Heart left ventricle (tissue), 16 donors: ENCODE measurements at regions of chr12 and their contacts with region 1.

Region 1: GRCh38 chr12:66169221-66170170 is at the start of gene TMBIM4:
- DNase-seq: peak; percentile 90 to 94 (median 92)
- ATAC-seq: peak; percentile 96 to 97 (median 97)
- H3K4me3 ChIP-seq: peak within 1 kb of the TSS; percentile 56 to 90 (median 85)
- H3K27ac ChIP-seq: peak within 1 kb of the TSS; percentile 92 to 100 (median 98)
- H3K4me1 ChIP-seq: peaks cover 0 to 40% (median 17%) of the 10 kb centered on the region in 12 donors
- H3K27me3 ChIP-seq: no peaks in the 10 kb centered on the region
- CTCF ChIP-seq: peak; percentile 46 to 84 (median 64)
- POLR2A ChIP-seq: peak in 1 of 2 donors; percentile 58
- total RNA-seq, gene TMBIM4: 52.2 to 131 (median 85.3) TPM

Region 2: GRCh38 chr12:66044731-66045130 is 124.8 kb before region 1 on chr12:
- intact Hi-C with region 1: no loop called
- DNase-seq: no peak
- ATAC-seq: no peak
- H3K4me3 ChIP-seq: no peak overlapping the region
- H3K27ac ChIP-seq: no peak overlapping the region
- H3K4me1 ChIP-seq: no peaks in the 10 kb centered on the region
- H3K27me3 ChIP-seq: peaks cover 0 to 3% (median 0%) of the 10 kb centered on the region in 9 donors
- CTCF ChIP-seq: no peak
- POLR2A ChIP-seq: no peak

Region 3: GRCh38 chr12:66188584-66189485 is 19.3 kb after region 1 on chr12 and contains the start of gene IRAK3:
- intact Hi-C with region 1: loop called in 3 of 10 experiments (anchors 1 to 2 kb)
- DNase-seq: peak; percentile 84 to 93 (median 90)
- ATAC-seq: peak; percentile 94 to 98 (median 98)
- H3K4me3 ChIP-seq: peak within 1 kb of the TSS; percentile 40 to 75 (median 65)
- H3K27ac ChIP-seq: peak within 1 kb of the TSS; percentile 82 to 96 (median 91)
- H3K4me1 ChIP-seq: peaks cover 0 to 52% (median 7%) of the 10 kb centered on the region in 12 donors
- H3K27me3 ChIP-seq: peaks cover 0 to 11% (median 0%) of the 10 kb centered on the region in 9 donors
- CTCF ChIP-seq: no peak
- POLR2A ChIP-seq: peak; percentile 27 to 87
- total RNA-seq, gene IRAK3: 3.0 to 11.4 (median 5.7) TPM

Region 4: GRCh38 chr12:66235626-66236281 is 66.3 kb after region 1 on chr12:
- intact Hi-C with region 1: loop called in 3 of 10 experiments (anchors 10 kb)
- DNase-seq: no peak
- ATAC-seq: no peak
- H3K4me3 ChIP-seq: peak overlapping the region; percentile 16 to 76 (median 58)
- H3K27ac ChIP-seq: peak overlapping the region in 6 of 12 donors; percentile 34 to 80 (median 48)
- H3K4me1 ChIP-seq: peaks cover 0 to 66% (median 5%) of the 10 kb centered on the region in 12 donors
- H3K27me3 ChIP-seq: no peaks in the 10 kb centered on the region
- CTCF ChIP-seq: peak in 1 of 12 donors; percentile 8
- POLR2A ChIP-seq: no peak

Region 5: GRCh38 chr12:66290716-66291200 is 121.3 kb after region 1 on chr12:
- intact Hi-C with region 1: loop called in 1 of 10 experiments (anchors 10 kb)
- DNase-seq: no peak
- ATAC-seq: no peak
- H3K4me3 ChIP-seq: no peak overlapping the region
- H3K27ac ChIP-seq: peak overlapping the region in 1 of 12 donors; percentile 33
- H3K4me1 ChIP-seq: no peaks in the 10 kb centered on the region
- H3K27me3 ChIP-seq: peaks cover 0 to 8% (median 0%) of the 10 kb centered on the region in 9 donors
- CTCF ChIP-seq: no peak
- POLR2A ChIP-seq: no peak

Region 6: DNA sequence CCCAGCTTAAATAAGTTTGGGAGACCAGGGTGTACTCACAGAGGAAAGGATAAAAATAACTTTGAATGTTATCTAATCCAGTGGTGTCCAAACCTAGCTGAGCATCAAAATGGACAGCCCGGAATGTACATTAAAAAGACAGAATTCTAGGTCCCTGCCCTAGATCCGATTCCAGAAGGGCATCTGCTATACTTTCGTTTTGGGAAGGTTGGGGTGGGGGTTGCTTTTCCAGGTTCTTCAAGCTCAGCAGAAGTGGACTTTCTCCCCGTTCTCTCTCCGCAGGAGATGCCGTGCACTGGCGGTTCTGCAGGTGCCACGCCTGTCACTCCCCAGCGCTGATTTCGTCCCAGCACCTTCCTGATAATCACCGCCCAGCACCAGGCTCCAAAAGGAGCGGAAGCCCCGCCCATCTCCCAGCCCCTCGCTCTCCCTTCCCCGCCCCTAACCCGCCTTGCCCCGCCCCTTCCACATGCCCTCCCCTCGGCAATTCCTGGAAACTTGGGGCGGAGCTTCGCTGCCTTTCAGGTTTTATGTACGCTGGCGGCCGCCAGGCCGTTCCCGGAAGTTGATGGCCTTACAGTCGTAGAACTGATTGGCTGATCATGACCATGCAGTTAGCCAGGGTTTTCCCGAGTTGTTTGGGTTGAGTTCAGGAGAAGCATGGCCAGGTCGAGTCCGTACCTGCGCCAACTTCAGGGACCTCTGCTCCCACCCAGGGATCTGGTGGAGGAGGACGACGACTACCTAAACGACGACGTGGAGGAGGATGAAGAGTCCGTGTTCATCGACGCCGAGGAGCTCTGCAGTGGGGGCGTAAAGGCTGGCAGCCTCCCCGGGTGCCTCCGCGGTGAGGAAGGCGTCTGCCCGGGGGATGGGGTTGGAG is 132.7 kb after region 1 on chr12 and contains the start of gene HELB:
- intact Hi-C with region 1: loop called in 5 of 10 experiments (anchors 2 to 10 kb)
- DNase-seq: peak; percentile 97 to 99 (median 98)
- ATAC-seq: peak; percentile 99 to 100 (median 100)
- H3K4me3 ChIP-seq: peak within 1 kb of the TSS; percentile 46 to 80 (median 72)
- H3K27ac ChIP-seq: peak within 1 kb of the TSS in 11 of 12 donors; percentile 47 to 93 (median 80)
- H3K4me1 ChIP-seq: peaks cover 0 to 26% (median 10%) of the 10 kb centered on the region in 12 donors
- H3K27me3 ChIP-seq: no peaks in the 10 kb centered on the region
- CTCF ChIP-seq: no peak
- POLR2A ChIP-seq: peak in 1 of 2 donors; percentile 40
- total RNA-seq, gene HELB: 0.32 to 4.3 (median 1.1) TPM